MCF 10A (cell line): ENCODE measurements at regions of chr20 and their contacts with region 1.

Region 1: GRCh38 chr20:1894951-1895673 is at the start of gene SIRPA:
- DNase-seq: peak; percentile 64
- H3K4me3 Mint-ChIP-seq: peak within 1 kb of the TSS; percentile 79
- H3K27ac Mint-ChIP-seq: peak within 1 kb of the TSS; percentile 66
- H3K4me1 Mint-ChIP-seq: peaks cover 37% of the 10 kb centered on the region
- H3K27me3 Mint-ChIP-seq: no peaks in the 10 kb centered on the region
- CTCF ChIP-seq: no peak
- total RNA-seq, gene SIRPA: 18.0 and 23.6 TPM in 2 replicates

Region 2: GRCh38 chr20:1802385-1803060 is 92.6 kb before region 1 on chr20:
- CTCF ChIA-PET with region 1: interaction called, 6 read pairs
- POLR2A ChIA-PET with region 1: no interaction called
- intact Hi-C with region 1: loop called (anchors 2 kb)
- DNase-seq: peak; percentile 45
- H3K4me3 Mint-ChIP-seq: no peak overlapping the region
- H3K27ac Mint-ChIP-seq: no peak overlapping the region
- H3K4me1 Mint-ChIP-seq: peaks cover 4% of the 10 kb centered on the region
- H3K27me3 Mint-ChIP-seq: no peaks in the 10 kb centered on the region
- CTCF ChIP-seq: peak; percentile 56

Region 3: GRCh38 chr20:1934721-1935573 is 39.8 kb after region 1 on chr20:
- CTCF ChIA-PET with region 1: no interaction called
- POLR2A ChIA-PET with region 1: interaction called, 10 read pairs
- intact Hi-C with region 1: loop called (anchors 2 kb)
- DNase-seq: peak; percentile 99
- H3K4me3 Mint-ChIP-seq: peak overlapping the region; percentile 43
- H3K27ac Mint-ChIP-seq: peak overlapping the region; percentile 86
- H3K4me1 Mint-ChIP-seq: peaks cover 43% of the 10 kb centered on the region
- H3K27me3 Mint-ChIP-seq: no peaks in the 10 kb centered on the region
- CTCF ChIP-seq: no peak